ENCODE measurements at regions of chr15 and their contacts with region 1.

Region 1: GRCh38 chr15:100627789-100628395 is 25.5 kb downstream of the ASB7 start:
- DNase-seq: peak; percentile 75
- ATAC-seq: peak; percentile 95
- H3K4me3 ChIP-seq: no peak overlapping the region
- H3K27ac ChIP-seq: peak overlapping the region; percentile 41; the same call in 1 of the 2 replicates
- H3K4me1 ChIP-seq: no peaks in the 10 kb centered on the region; the same call in 1 of the 2 replicates
- H3K27me3 ChIP-seq: no peaks in the 10 kb centered on the region
- CTCF ChIP-seq: peak; percentile 87

Region 2: DNA sequence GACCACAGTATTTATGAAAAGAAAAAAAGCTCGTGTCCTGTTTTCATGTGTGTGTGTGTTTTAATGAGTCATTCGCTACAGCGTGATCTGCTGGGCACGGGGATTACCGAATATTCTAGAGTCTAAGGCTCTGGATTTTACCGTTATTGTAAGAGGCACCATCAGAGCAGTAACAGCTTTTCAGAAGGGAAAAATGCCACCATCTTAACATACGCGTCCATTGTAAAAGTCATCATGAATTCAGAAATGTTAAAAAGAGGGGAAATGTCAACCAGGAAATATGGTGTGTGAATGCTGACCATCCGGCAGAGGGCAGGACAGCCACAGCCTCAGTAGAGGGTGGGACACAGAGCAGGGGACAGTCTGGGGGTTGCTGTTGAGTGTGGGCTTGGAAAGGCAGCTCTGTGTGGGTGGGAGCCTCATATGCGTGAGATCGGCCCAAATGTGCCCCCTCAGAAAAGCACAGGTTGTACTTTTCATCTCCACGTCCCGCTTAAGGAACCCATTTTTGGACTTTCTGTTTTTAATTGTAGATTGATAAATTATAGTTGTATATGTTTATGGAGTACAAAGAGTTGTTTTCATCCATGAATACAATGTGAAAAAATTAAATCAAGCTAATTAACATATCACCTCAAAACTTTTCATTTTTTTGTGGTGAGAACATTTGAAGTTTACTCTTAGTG is 44.1 kb after region 1 on chr15:
- CTCF ChIA-PET with region 1: no interaction called
- POLR2A ChIA-PET with region 1: no interaction called
- in situ Hi-C with region 1: no loop called
- intact Hi-C with region 1: no loop called
- DNase-seq: peak; percentile 30
- ATAC-seq: peak; percentile 97
- H3K4me3 ChIP-seq: peak overlapping the region in 1 of 2 experiments; percentile 31; a peak in 2 of 4 replicates
- H3K27ac ChIP-seq: peak overlapping the region; percentile 72
- H3K4me1 ChIP-seq: peaks cover 12% of the 10 kb centered on the region
- H3K27me3 ChIP-seq: no peaks in the 10 kb centered on the region
- CTCF ChIP-seq: peak; percentile 90

Region 3: DNA sequence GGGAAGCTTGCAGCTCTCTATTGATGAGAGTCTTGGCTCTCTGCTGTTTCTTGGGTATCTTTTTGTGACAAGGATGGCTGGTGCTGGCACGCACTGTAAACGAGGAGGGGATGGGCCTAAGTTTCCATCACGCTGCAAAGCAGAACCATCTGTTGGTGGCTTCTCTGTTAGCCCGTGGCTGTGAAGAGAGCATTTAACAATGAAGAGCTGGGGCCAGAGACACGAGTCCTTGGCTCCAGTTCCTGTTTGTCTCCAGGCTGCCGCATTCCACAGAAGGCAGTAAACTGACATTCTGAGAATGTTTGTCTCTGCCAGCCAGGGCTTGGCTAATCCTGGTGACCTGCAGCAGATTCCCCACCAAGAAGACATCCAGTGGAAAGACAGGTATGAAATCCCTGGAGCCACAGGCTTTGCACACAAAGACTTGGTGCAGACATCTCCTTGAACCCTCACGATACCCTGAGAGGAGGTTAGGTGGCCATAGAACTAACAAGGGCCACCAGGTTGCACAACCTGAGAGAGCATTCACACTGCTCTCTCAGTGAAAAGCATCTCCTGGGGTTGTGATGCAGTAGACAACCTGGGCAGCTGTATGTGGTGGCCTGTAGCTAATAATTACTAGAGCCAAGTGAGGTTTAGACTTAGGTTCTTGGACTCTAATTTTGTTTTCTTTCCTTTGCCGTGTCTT is 105.4 kb after region 1 on chr15:
- CTCF ChIA-PET with region 1: no interaction called
- POLR2A ChIA-PET with region 1: no interaction called
- in situ Hi-C with region 1: no loop called
- intact Hi-C with region 1: no loop called
- DNase-seq: no peak
- ATAC-seq: peak; percentile 65
- H3K4me3 ChIP-seq: no peak overlapping the region
- H3K27ac ChIP-seq: peak overlapping the region; percentile 80
- H3K4me1 ChIP-seq: peaks cover 42% of the 10 kb centered on the region
- H3K27me3 ChIP-seq: no peaks in the 10 kb centered on the region
- CTCF ChIP-seq: no peak

Region 4: GRCh38 chr15:100873029-100873677 is 245.3 kb after region 1 on chr15:
- CTCF ChIA-PET with region 1: no interaction called
- POLR2A ChIA-PET with region 1: no interaction called
- in situ Hi-C with region 1: no loop called
- intact Hi-C with region 1: loop called (anchors 1 kb)
- DNase-seq: peak; percentile 80
- ATAC-seq: peak; percentile 79
- H3K4me3 ChIP-seq: no peak overlapping the region
- H3K27ac ChIP-seq: peak overlapping the region; percentile 40; the same call in 1 of the 2 replicates
- H3K4me1 ChIP-seq: peaks cover 6% of the 10 kb centered on the region; the same call in 1 of the 2 replicates
- H3K27me3 ChIP-seq: no peaks in the 10 kb centered on the region
- CTCF ChIP-seq: peak; percentile 89